Dendritic cell treated with granulocyte-macrophage colony-stimulating factor and Interleukin-4, amounts not matched to agents 40 ng/mL and 50 ng/mL, for 4 days (primary cell): ENCODE measurements at regions of chr4 and their contacts with region 1.

Region 1: GRCh38 chr4:4880492-4880891 is 21.0 kb downstream of the MSX1 start:
- H3K4me3 Mint-ChIP-seq: no peak overlapping the region
- H3K27ac Mint-ChIP-seq: no peak overlapping the region
- H3K4me1 Mint-ChIP-seq: no peaks in the 10 kb centered on the region
- H3K27me3 Mint-ChIP-seq: peaks cover 18% of the 10 kb centered on the region

Region 2: DNA sequence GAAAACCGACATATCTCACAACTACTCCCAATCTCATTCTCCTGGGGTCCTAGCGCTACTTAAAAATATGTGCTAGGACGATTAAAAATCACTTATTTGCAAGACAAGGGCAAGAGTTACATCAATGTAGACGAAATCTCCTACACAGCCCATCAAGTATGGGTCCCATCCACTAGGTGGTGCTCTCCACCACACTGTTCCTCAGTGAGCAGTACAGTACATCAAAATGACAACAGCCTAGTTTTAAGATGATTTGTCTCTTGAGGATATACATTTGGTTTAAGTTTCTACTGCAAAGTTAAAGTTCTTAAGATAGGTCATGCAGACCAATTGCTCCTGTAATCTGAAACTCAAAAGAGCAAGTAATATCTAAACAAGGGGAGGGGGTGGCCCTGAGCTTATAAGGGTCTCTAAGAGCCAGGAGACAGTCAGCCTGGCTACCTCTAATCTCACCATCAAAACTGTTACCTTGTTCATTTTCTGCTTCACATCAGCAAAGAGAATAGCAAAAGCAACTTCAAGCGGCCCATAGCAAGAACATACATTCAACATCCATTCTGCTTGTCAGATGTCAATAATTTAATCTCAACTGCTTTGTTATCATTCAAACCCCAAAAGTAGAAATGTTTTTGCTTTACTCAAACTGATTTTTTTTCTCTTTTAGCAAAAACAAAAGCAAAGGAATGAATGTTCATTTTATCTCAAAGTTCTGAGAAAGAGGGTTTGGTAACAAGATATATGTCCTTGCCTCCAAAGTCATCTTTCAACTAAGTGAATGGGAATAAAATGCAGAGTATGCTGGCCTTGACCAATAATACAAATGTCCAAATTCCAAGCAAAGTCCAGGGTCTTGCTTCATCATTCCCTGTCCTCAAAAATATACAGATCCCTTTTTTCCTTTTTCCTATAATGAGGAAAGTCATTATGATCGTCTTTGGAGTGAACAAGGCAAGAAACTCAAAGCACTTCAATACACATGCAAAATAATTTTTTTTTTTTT is 391.8 kb before region 1 on chr4:
- intact Hi-C with region 1: loop called (anchors 5 kb)
- H3K4me3 Mint-ChIP-seq: no peak overlapping the region
- H3K27ac Mint-ChIP-seq: no peak overlapping the region
- H3K4me1 Mint-ChIP-seq: peaks cover 5% of the 10 kb centered on the region
- H3K27me3 Mint-ChIP-seq: no peaks in the 10 kb centered on the region